BJ (cell line): ENCODE measurements at regions of chr19 and their contacts with region 1.

Region 1: DNA sequence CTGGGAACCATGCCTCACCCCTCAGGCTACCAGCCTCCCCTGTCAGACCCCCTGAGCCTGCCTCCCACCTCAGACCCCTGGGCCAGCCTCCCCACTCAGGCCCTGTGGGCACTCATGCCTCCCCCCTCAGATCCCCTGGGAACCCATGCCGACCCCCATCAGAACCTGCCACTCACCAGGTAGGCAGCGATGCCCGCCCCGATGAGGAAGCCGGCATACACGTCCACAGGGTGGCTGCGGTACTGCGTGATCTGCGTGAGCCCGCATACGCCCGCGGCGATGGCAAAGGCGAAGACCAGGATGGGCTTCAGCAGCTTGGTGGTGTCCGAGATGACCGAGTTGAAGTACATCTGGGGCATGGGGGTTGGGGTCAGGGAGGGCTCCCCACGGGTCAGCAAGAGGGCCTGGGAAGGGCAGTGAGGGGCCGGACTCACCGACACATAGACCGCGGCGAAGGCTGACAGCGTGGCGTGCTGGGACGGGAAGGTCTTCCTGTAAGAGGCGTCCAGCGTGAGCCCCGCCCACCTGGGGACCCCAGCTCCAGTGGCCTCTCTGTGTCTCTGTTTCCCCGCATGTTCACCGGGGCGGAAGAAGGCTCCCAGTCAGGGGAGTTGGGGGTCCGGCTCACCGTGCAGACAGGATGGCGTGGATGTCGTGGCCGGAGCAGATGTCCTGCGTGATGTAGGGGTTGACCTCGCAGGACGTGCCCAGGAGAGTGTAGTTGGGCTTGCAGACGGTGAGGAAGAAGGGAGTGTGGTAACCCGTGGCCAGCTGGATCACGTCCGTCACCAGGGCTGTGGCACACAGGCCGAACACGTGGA is 7.3 kb downstream of the PLPPR3 start:
- DNase-seq: no peak
- H3K4me3 ChIP-seq: no peak overlapping the region
- H3K27me3 ChIP-seq: no peaks in the 10 kb centered on the region
- CTCF ChIP-seq: no peak

Region 2: DNA sequence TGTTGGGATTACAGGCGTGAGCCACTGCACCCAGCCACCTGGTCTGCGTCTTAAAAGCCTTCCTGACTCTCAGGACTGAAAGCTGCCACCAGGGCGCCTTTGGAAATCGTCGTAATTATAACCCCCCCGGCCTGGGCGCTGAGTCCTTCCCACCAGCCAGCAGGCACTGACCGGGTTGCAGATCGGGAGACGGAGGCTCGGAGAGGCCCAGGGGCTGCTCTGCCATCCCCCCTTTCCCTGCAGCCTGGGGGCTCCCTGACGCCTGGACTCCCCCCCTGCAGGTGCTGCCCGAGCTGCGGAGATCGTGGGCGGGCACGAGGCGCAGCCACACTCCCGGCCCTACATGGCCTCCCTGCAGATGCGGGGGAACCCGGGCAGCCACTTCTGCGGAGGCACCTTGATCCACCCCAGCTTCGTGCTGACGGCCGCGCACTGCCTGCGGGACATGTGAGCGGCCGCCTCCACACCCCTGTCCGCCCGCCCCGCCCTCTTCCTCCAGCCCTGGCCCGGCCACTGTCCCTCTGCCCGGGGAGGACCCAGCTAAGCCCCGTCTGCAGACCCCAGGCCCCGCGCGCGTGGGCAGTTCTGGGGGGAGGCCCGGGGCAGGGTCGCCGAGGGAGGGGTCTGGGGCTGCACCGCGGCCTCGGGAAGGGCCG is 28.8 kb after region 1 on chr19:
- CTCF ChIA-PET with region 1: no interaction called
- POLR2A ChIA-PET with region 1: interaction called, 16 read pairs
- DNase-seq: no peak
- H3K4me3 ChIP-seq: peak overlapping the region; percentile 21
- H3K27me3 ChIP-seq: peaks cover 14% of the 10 kb centered on the region
- CTCF ChIP-seq: no peak; the same call in 1 of the 2 replicates

Region 3: DNA sequence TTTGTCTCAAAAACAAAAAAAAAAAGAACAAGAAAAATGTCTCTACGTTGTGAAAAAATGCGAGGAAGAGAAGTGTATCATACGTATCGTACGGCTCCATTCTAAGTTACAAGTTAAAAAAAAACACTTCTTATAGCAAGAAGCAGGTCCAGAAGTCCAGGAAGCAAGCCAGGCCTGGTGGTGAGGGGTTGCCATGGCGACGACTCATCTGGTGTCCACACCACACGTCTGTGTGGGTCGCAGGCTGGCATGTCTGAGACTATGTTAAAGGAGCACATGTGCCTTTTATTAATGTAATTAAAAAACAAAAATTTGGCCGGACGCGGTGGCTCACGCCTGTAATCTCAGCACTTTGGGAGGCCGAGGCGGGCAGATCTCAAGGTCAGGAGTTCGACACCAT is 72.6 kb after region 1 on chr19:
- CTCF ChIA-PET with region 1: no interaction called
- POLR2A ChIA-PET with region 1: no interaction called
- DNase-seq: peak; percentile 83
- H3K4me3 ChIP-seq: no peak overlapping the region
- H3K27me3 ChIP-seq: no peaks in the 10 kb centered on the region
- CTCF ChIP-seq: no peak